ENCODE measurements at regions of chr11 and their contacts with region 1.

Region 1: DNA sequence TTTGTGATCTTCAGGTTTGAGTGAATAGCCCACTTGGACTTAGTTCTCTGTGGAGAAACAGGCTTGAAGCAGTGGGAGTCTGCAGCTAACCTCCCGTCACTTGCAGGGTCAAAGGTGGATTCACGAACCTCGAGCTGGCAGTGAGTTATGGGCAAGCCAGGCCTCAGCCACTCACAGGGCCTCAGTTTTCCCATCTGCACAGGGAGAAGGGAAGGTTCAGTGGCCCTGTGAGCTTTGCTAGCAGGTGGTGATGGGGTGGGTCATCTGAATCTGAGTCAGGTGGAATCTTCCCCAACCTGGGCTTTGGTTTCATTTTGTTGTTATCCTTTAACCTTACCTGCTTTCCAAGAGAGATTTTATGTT is 86.6 kb upstream of the GRIK4 start:
- DNase-seq: no peak
- H3K4me3 ChIP-seq: no peak overlapping the region
- H3K27me3 ChIP-seq: no peaks in the 10 kb centered on the region
- CTCF ChIP-seq: no peak

Region 2: GRCh38 chr11:120316842-120317688 is 107.9 kb before region 1 on chr11:
- CTCF ChIA-PET with region 1: no interaction called
- POLR2A ChIA-PET with region 1: no interaction called
- DNase-seq: no peak
- H3K4me3 ChIP-seq: no peak overlapping the region
- H3K27me3 ChIP-seq: peaks cover 10% of the 10 kb centered on the region
- CTCF ChIP-seq: no peak

Region 3: DNA sequence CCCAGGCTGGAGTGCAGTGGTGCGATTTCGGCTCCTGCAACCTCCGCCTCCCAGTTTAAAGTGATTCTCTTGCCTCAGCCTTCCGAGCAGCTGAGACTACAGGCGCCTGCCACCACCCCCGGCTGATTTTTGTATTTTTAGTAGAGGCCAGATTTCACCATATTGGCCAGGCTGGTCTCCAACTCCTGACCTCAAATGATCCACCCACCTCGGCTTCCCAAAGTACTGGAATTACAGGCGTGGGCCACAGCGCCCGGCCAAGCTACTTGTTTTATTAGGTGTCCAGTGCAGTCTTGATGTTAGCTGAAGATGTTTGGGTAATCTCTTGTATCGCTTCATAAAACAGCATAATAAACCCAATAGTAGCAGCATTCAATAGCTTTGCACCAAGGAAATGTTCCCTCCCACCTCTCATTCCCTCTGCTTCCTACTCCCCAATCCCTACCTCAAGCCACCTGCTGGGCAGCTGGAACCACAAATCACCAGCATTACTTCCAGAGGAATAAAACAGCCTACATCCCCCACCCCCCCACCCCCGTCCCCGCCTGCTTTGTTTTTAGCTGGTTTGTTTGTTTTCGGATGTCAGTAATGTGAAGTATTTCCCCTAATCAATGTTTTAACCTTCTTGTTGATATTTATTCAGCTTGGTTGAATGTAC is 75.6 kb after region 1 on chr11:
- CTCF ChIA-PET with region 1: no interaction called
- POLR2A ChIA-PET with region 1: interaction called, 16 read pairs
- DNase-seq: peak; percentile 19
- H3K4me3 ChIP-seq: no peak overlapping the region
- H3K27me3 ChIP-seq: no peaks in the 10 kb centered on the region
- CTCF ChIP-seq: no peak

Region 4: GRCh38 chr11:120579611-120580031 is 154.7 kb after region 1 on chr11:
- CTCF ChIA-PET with region 1: no interaction called
- POLR2A ChIA-PET with region 1: no interaction called
- DNase-seq: no peak
- H3K4me3 ChIP-seq: no peak overlapping the region
- H3K27me3 ChIP-seq: no peaks in the 10 kb centered on the region; the same call in none of the 2 replicates
- CTCF ChIP-seq: no peak

Measured in BJ (cell line).